Body of pancreas (tissue), 4 donors: ENCODE measurements at regions of chr5 and their contacts with region 1.

Region 1: GRCh38 chr5:134577796-134578363 is 52.4 kb downstream of the JADE2 start:
- DNase-seq: peak; percentile 80 to 88 (median 82)
- ATAC-seq: peak; percentile 73
- H3K4me3 ChIP-seq: no peak overlapping the region
- H3K27ac ChIP-seq: no peak overlapping the region
- H3K4me1 ChIP-seq: peaks cover 15% of the 10 kb centered on the region
- H3K27me3 ChIP-seq: no peaks in the 10 kb centered on the region
- CTCF ChIP-seq: peak; percentile 64 to 88 (median 81)
- POLR2A ChIP-seq: no peak

Region 2: GRCh38 chr5:134304311-134304710 is 273.6 kb before region 1 on chr5:
- intact Hi-C with region 1: loop called (anchors 5 kb)
- DNase-seq: no peak
- ATAC-seq: no peak
- H3K4me3 ChIP-seq: no peak overlapping the region
- H3K27ac ChIP-seq: no peak overlapping the region
- H3K4me1 ChIP-seq: peaks cover 12% of the 10 kb centered on the region
- H3K27me3 ChIP-seq: no peaks in the 10 kb centered on the region
- CTCF ChIP-seq: no peak
- POLR2A ChIP-seq: no peak

Region 3: DNA sequence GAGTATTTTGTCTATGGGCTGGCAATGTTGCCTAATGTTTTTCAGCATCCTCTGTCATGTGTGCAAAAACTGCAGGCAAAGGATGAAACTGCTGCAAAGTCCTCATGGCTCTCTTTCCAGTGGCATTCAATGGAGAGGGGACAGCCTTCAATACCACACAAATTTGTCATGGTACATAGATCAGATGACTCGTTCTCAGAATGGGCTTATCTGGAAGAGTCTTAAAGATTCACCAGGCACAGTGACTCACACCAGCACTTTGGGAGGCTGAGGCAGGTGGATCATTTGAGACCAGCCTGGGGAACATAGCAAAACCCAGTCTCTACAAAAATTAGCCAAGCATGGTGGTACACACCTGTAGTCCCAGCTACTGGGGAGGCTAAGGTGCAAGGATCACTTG is 171.5 kb before region 1 on chr5:
- intact Hi-C with region 1: loop called (anchors 10 kb)
- DNase-seq: no peak
- ATAC-seq: no peak
- H3K4me3 ChIP-seq: no peak overlapping the region
- H3K27ac ChIP-seq: no peak overlapping the region
- H3K4me1 ChIP-seq: peaks cover 34% of the 10 kb centered on the region
- H3K27me3 ChIP-seq: no peaks in the 10 kb centered on the region
- CTCF ChIP-seq: no peak
- POLR2A ChIP-seq: no peak

Region 4: DNA sequence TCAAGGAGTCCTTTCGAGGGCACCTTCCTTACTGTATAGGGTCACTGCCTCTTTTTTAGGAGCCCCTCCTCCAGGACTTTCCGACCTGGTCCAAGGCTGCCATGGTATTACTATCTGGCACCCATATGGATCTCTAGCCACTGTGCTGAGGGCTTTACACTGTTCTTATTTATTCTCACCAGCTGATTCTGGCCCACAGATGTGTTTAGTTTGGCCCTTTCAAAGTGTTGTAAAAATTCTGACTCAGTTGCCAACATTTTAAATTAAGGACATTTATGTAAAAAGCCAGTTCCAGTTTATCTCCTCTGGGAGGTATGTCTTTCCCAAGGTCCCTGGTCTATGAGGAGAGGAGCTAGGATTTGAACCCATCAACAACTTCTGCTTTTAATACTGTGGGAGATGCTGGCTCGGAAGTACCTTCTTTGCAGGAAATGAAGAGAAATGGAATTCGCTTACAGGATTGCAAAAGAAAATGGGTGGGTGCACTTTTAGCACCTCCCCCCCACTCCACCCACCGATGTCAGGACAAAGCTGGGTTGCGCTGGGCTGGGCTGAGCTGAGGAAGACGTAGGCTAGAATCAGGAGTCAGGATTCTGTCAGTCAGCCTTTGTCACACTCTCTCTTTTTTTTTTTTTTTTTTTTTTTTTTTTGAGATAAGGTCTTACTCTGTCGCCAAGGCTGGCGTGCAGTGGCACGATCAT is 44.6 kb before region 1 on chr5:
- intact Hi-C with region 1: loop called (anchors 5 kb)
- DNase-seq: peak in 3 of 4 donors; percentile 23 to 33 (median 30)
- ATAC-seq: no peak
- H3K4me3 ChIP-seq: no peak overlapping the region
- H3K27ac ChIP-seq: peak overlapping the region in 1 of 4 donors; percentile 4
- H3K4me1 ChIP-seq: peaks cover 63% of the 10 kb centered on the region
- H3K27me3 ChIP-seq: no peaks in the 10 kb centered on the region
- CTCF ChIP-seq: no peak
- POLR2A ChIP-seq: no peak

Region 5: DNA sequence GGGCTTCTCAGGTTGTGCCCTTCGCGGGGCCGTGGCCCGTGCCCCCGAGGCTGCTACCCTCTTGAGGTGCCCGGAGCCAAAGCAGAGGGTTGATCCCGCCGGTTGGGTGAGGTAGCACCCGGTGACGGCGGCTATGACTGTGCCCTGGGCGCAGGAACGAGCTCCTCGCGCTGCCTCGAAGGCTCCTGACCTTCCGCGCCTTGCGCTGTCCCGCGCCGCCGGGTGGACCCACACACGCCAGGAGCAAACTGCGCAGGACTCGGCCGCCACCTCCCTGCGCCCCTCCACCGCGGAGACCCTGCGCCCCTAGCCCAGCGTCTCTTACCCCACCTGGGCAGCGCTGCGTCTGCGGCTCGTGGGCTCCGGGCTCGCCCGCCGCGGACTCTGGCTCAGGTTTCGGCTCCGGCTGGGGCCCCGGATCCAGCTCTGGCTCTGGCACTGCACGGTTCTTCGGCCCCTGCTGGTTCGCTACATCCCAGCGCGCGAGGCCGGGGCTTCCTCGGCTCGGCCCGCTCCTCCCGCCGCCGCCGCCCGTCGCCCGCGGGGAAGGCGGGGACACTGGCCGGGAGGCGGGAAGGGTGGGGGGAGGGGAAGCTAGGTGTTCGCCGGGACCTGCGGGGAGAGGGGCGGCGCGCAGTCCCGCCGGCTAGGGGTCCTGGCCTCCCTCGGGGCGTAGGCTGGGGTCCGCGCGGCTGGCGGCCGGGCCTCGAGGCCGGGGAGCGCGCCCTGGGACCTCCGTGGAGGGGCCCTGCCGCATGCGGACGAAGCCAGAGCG is 461.6 kb after region 1 on chr5:
- intact Hi-C with region 1: no loop called
- DNase-seq: no peak
- ATAC-seq: no peak
- H3K4me3 ChIP-seq: no peak overlapping the region
- H3K27ac ChIP-seq: no peak overlapping the region
- H3K4me1 ChIP-seq: peaks cover 29% of the 10 kb centered on the region
- H3K27me3 ChIP-seq: peaks cover 0 to 44% of the 10 kb centered on the region in 2 donors
- CTCF ChIP-seq: no peak
- POLR2A ChIP-seq: no peak